ENCODE measurements at regions of chr17 and their contacts with region 1.

Region 1: DNA sequence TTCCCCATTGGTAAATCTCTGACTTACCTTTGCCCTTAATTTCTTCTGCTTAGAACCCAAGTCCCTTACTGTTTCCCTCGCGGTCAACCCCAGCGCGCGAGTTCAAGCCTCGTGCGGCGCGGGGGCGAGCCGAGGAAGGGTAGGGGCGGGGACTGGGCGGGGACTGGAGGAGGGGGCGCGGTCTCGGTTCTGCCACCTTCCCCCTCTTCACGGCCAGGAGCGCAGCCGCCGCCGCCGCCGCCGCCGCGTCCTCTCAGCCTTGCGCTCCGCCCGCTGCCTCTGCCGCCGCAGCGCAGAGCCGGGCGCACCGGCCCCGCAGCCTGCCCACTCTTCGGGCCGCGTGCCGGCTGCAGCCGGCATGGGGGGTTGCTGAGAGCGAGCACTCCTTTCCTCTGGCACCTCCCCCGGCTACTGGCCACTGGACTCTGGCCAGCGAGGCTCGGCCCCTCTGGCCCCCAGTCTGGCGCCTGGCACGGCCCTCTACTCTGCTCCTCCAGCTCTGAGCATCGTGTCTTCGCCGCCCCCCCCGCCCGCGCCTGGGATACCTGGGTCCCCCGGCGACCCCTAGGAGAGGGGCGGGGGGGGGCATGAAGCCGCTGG is at the start of gene RAPGEFL1:
- DNase-seq: peak; percentile 69
- H3K4me3 Mint-ChIP-seq: peak within 1 kb of the TSS; percentile 59
- H3K27ac Mint-ChIP-seq: peak within 1 kb of the TSS; percentile 92
- H3K4me1 Mint-ChIP-seq: peaks cover 29% of the 10 kb centered on the region
- H3K27me3 Mint-ChIP-seq: no peaks in the 10 kb centered on the region
- CTCF ChIP-seq: no peak
- total RNA-seq, gene RAPGEFL1: 4.9 and 5.6 TPM in 2 replicates

Region 2: DNA sequence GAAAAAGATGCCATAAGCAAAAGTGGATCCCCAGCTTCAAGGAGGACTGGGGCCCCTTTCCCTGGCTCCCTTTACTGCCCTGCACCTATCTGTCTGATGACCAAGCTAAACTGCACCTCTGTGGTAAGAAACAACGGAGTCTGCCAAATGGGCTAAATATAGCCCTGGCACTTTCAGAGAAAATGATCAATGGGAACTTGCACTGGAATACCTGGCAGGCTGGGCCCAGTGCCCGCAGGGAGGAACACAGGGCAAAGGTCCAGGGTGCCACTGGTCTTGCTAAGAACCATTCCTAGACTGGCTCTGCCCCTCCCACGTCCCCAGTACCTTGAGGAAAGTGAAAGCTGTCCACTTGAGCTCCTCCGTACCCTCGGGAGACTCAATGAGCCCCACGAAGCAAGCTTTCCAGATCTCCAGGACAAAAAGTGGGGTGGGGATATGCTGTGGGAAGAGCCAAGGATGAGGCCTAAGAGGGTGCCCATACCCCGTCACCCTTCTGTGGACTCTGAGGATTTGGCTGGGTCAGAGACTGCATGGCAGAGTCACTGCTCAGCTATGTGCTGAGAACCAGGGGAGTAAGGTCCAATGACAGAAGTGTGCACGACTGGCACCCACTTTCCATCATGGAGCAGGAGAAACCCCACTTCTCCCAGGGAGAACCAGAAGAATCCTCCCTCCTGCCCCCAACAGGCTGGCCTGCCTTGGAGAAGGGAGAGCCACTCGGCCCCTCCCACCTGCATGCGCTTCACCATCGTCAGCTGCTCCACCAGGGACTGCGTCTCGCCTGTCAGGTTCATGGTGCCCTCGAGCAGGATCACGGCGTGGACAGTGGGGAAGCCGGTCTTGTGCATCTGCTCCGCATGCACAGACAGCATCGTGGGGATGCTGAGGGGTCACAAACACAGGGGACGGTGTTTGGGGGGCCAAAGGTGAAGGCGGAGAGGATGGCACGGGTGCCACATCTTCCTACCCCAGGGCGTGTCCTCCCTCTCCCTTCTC is 144.8 kb before region 1 on chr17:
- CTCF ChIA-PET with region 1: no interaction called
- POLR2A ChIA-PET with region 1: no interaction called
- intact Hi-C with region 1: no loop called
- DNase-seq: peak; percentile 42
- H3K4me3 Mint-ChIP-seq: no peak overlapping the region
- H3K27ac Mint-ChIP-seq: no peak overlapping the region
- H3K4me1 Mint-ChIP-seq: peaks cover 5% of the 10 kb centered on the region
- H3K27me3 Mint-ChIP-seq: no peaks in the 10 kb centered on the region
- CTCF ChIP-seq: no peak

Region 3: DNA sequence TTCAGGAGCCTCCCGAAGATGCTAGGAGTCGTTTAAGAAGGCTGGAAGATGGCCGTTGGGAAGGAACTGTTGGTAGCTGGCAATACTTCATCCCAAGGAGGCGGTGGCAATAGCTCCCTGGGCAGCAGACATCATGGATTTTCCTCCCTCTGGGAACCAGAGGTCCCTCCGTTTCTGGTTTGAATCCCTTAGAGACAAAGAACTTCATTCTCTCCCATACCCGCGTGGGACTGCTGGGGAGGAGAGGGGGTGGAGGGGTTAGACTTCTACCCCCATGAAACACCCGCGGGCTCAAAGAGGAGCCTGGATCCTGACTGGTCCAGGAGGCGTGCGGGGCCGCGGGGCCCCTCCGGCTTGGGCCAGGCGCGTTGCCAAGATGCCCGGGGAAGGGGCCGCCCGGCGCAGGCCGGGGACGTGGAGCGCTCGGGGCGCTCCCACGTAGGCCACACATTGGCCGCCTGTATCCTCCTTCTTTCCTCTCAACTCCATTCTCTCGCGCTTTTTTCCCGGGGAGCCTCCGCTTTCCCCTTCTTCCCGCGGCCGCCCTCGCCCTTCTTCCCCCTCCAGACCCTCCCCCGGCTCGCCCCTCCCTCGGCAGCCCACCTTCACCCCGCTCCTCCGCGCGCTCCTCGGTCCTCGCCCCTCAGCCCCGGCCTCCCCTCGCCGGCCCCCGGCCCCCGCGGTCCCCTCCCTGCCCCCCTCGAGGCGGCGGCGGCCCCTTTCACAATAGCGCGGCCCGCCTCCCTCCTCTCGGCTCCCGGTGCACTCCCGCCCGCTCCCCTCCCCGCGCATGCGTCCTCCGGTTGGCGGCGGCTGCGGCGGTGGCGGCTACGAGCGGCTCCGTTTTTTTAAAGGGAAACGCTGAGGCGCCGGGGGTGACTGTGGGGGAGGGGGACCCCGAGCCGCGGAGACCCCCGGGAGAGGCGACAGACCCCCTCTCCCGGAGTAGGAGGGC is 55.9 kb before region 1 on chr17 and contains the start of gene MSL1:
- CTCF ChIA-PET with region 1: no interaction called
- POLR2A ChIA-PET with region 1: interaction called, 19 read pairs
- intact Hi-C with region 1: no loop called
- DNase-seq: peak; percentile 81
- H3K4me3 Mint-ChIP-seq: peak within 1 kb of the TSS; percentile 99
- H3K27ac Mint-ChIP-seq: peak within 1 kb of the TSS; percentile 82
- H3K4me1 Mint-ChIP-seq: peaks cover 20% of the 10 kb centered on the region
- H3K27me3 Mint-ChIP-seq: no peaks in the 10 kb centered on the region
- CTCF ChIP-seq: no peak
- total RNA-seq, gene MSL1: 59.8 and 62.2 TPM in 2 replicates

Region 4: GRCh38 chr17:40510328-40510648 is 332.9 kb after region 1 on chr17:
- CTCF ChIA-PET with region 1: no interaction called
- POLR2A ChIA-PET with region 1: no interaction called
- intact Hi-C with region 1: no loop called
- DNase-seq: peak; percentile 99
- H3K4me3 Mint-ChIP-seq: peak overlapping the region; percentile 48
- H3K27ac Mint-ChIP-seq: peak overlapping the region; percentile 95
- H3K4me1 Mint-ChIP-seq: peaks cover 56% of the 10 kb centered on the region
- H3K27me3 Mint-ChIP-seq: no peaks in the 10 kb centered on the region
- CTCF ChIP-seq: no peak

Region 5: GRCh38 chr17:40526668-40527067 is 349.3 kb after region 1 on chr17:
- CTCF ChIA-PET with region 1: no interaction called
- POLR2A ChIA-PET with region 1: no interaction called
- intact Hi-C with region 1: no loop called
- DNase-seq: no peak
- H3K4me3 Mint-ChIP-seq: no peak overlapping the region
- H3K27ac Mint-ChIP-seq: no peak overlapping the region
- H3K4me1 Mint-ChIP-seq: peaks cover 39% of the 10 kb centered on the region
- H3K27me3 Mint-ChIP-seq: no peaks in the 10 kb centered on the region
- CTCF ChIP-seq: no peak

Measured in MCF 10A (cell line).